ENCODE measurements at regions of chr5 and their contacts with region 1.

Region 1: DNA sequence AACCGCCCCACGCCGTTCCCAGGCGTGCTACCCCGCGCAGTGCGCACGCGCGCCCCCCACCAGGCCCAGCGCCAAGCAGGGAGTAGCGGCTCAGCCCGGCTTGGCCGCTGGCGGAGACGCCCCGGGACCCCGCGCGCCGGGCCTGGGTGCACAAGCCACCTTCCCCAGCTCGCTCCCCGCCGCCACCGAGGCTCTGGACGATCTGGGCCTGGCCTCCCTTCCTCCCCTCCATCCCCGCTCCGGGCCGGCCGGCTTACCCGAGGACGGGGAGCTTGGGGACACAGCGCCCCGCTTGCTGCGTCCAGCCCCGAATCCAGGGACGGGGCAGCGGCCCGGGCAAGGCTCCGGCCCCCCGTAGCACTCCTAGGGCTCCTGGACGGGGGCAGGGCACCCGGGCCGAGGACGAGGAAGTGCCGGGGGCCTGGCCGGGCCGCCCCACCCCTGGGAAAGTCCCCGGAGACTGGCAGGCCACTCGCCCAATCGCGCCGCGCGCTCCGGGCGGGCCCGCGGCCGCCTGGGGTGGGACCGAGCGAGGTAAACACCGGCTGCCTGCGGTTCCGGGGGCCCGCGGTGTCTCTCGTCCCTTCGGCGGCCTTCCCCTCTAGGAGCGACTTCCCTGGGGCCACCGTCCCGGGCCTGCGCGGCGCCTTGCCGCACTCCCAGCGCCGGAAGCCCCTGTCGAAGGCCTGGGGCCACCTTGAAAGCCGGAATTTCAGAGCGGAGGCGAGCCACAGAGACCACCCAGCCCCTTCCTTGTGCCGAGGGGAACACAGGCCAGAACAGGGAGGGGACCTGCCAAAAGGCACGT is at the start of gene TNIP1:
- DNase-seq: peak; percentile 88 to 94 (median 89)
- H3K4me3 ChIP-seq: peak within 1 kb of the TSS; percentile 71 to 91 (median 85)
- H3K4me3 Mint-ChIP-seq: peak within 1 kb of the TSS; percentile 81 to 93
- H3K27ac ChIP-seq: peak within 1 kb of the TSS; percentile 95 to 100
- H3K27ac Mint-ChIP-seq: peak within 1 kb of the TSS; percentile 94 to 98 (median 97)
- H3K4me1 ChIP-seq: peaks cover 65 to 84% of the 10 kb centered on the region in 2 donors
- H3K4me1 Mint-ChIP-seq: peaks cover 81% of the 10 kb centered on the region
- H3K27me3 ChIP-seq: no peaks in the 10 kb centered on the region
- H3K27me3 Mint-ChIP-seq: no peaks in the 10 kb centered on the region
- CTCF ChIP-seq: no peak
- polyA plus RNA-seq, gene TNIP1: 30.8 to 108 (median 46.4) TPM

Region 2: GRCh38 chr5:151058891-151059489 is 21.8 kb before region 1 on chr5:
- intact Hi-C with region 1: loop called in 1 of 2 experiments (anchors 2 kb)
- DNase-seq: peak; percentile 72 to 84 (median 84)
- H3K4me3 ChIP-seq: peak overlapping the region in 1 of 3 experiments; percentile 43
- H3K4me3 Mint-ChIP-seq: peak overlapping the region; percentile 62 to 78
- H3K27ac ChIP-seq: peak overlapping the region; percentile 69 to 90
- H3K27ac Mint-ChIP-seq: peak overlapping the region; percentile 96 to 99 (median 99)
- H3K4me1 ChIP-seq: peaks cover 92 to 99% of the 10 kb centered on the region in 2 donors
- H3K4me1 Mint-ChIP-seq: peaks cover 99% of the 10 kb centered on the region
- H3K27me3 ChIP-seq: no peaks in the 10 kb centered on the region
- H3K27me3 Mint-ChIP-seq: peaks cover 0 to 4% (median 0%) of the 10 kb centered on the region in 3 donors
- CTCF ChIP-seq: no peak

Region 3: DNA sequence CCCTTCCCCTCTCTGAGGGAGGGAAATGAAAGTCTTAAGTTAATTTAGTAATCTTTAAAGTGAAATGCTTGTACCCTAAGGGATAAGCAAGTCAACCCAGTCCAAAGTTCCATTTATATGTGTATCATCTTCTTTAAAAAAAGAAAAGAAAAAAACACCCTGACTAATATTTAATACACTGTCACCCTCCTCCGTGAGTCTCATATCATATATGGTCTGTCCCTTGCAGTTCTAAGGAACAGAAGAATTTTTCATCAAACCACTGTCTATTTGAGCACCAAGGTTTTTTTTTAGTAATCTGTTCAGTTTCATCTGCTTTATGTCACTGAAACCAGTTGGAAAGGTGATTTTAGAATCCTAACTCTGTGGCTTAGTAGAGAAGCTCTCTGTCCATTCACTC is 15.2 kb before region 1 on chr5:
- intact Hi-C with region 1: loop called in 1 of 2 experiments (anchors 2 kb)
- DNase-seq: no peak
- H3K4me3 ChIP-seq: no peak overlapping the region
- H3K4me3 Mint-ChIP-seq: no peak overlapping the region
- H3K27ac ChIP-seq: peak overlapping the region in 1 of 2 donors; percentile 43
- H3K27ac Mint-ChIP-seq: peak overlapping the region in 2 of 7 donors; percentile 47 to 80
- H3K4me1 ChIP-seq: peaks cover 83 to 94% of the 10 kb centered on the region in 2 donors
- H3K4me1 Mint-ChIP-seq: peaks cover 96% of the 10 kb centered on the region
- H3K27me3 ChIP-seq: no peaks in the 10 kb centered on the region
- H3K27me3 Mint-ChIP-seq: no peaks in the 10 kb centered on the region
- CTCF ChIP-seq: no peak

Region 4: GRCh38 chr5:151093476-151093889 is 12.7 kb after region 1 on chr5:
- intact Hi-C with region 1: loop called in 1 of 2 experiments (anchors 2 kb)
- DNase-seq: peak; percentile 78 to 99 (median 95)
- H3K4me3 ChIP-seq: peak overlapping the region in 1 of 3 experiments; percentile 23
- H3K4me3 Mint-ChIP-seq: peak overlapping the region; percentile 72 to 76
- H3K27ac ChIP-seq: peak overlapping the region; percentile 94 to 96
- H3K27ac Mint-ChIP-seq: peak overlapping the region; percentile 98 to 100 (median 100)
- H3K4me1 ChIP-seq: peaks cover 88 to 97% of the 10 kb centered on the region in 2 donors
- H3K4me1 Mint-ChIP-seq: peaks cover 92% of the 10 kb centered on the region
- H3K27me3 ChIP-seq: no peaks in the 10 kb centered on the region
- H3K27me3 Mint-ChIP-seq: peaks cover 0 to under 1% (median 0%) of the 10 kb centered on the region in 3 donors
- CTCF ChIP-seq: no peak

Measured in CD14-positive monocyte (primary cell).